Head of caudate nucleus (tissue), 42 donors: ENCODE measurements at regions of chr7 and their contacts with region 1.

Region 1: GRCh38 chr7:39623018-39623731 is at the start of gene RALA:
- DNase-seq: peak; percentile 81 to 98 (median 96)

Region 2: DNA sequence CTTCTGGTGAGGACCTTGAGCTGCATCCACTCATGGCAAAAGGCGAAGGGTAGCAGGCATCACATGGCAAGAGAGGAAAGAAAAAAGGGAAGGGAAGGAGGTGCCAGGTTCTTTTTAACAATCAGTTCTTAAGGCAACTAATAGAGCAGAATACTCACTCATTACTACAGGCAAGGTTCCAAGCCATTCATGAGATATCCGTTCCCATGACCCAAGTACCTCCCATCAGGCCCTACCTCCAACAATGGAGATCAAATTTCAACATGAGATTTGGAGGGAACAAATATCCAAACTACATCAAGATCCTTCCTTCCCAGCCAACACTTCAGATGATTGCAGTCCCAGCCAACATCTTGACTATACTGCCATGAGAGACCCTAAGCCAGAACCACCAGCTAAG is 95.9 kb before region 1 on chr7:
- intact Hi-C with region 1: no loop called
- DNase-seq: no peak

Region 3: DNA sequence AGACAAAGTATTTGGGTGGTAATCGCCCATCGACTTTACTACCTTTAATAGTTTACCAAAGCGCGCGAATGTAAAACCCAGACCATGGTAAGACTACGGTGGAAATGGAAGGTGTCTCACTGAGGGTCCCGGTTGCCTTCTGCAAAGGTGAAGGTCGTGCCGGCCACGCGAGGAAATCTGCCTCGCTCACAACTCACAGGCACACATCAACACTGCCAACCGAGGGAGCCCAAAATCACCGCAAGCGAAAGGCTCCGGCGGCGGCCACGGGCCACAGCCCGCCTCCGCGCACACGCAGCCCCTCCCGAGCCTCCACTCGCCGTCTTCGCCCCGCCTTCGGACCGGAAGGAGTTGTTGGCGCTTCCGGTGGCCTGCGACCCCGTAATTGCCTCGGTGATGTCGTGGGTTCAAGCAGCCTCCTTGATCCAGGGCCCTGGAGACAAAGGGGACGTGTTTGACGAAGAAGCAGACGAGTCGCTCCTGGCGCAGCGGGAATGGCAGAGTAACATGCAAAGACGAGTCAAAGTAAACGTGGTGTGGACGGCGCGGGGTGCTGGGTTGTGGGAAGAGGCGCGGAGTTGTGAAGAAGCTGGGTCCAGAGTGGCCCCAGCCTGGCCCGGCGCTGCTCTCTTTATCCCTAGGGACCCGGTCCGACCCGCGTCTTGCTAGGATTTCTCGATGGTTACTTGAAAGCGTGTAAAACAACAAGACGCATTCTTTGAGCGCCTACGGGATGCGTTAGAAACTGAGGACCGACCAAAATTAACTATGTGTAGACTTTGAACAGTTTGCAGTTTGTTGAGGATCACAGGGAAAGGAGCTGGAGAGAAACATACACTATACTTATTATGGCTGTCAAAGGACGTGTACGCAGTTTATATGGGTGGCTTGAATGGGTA is 56.9 kb before region 1 on chr7 and contains the start of gene YAE1:
- intact Hi-C with region 1: loop called (anchors 5 kb)
- DNase-seq: peak; percentile 77 to 94 (median 90)

Region 4: GRCh38 chr7:39735903-39736302 is 112.7 kb after region 1 on chr7:
- intact Hi-C with region 1: loop called (anchors 5 kb)
- DNase-seq: no peak